ENCODE measurements at regions of chr17 and their contacts with region 1.

Region 1: DNA sequence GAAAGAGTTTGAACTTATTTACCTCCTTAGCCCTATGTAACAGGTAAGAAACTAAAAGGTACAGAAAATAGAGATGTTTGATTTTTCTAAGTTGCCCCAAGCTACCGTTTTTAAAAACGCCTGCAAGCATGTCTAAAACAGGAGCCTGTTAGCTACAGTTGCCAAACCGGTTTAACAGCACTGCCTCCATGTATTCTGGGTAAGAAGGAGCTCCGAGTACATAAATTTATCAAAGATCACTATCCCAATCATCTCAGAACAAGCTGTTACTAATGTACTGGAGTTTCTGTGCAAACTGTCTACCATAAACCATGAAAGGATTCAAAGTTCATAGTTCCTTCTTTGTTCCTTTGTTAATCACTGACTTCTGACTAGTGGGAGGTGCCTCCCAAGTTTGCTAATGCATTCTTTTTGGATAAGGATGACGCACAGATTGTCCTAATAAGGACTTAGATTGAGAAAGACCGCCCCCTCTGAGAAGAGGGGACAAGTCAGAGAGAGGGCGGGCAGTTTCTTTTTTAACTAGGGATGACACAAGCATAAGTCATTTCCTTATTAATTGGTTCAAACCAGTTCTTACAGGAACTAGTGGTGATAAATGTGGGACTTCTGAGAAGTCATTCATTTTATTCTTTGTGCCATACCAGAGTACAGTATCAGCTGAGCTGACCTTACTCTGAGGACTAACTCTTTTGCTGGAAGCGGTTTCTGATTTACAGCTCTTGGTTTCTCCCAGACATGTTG is 55.3 kb downstream of the TUBD1 start:
- DNase-seq: peak; percentile 82
- ATAC-seq: peak; percentile 86
- H3K4me3 Mint-ChIP-seq: peak overlapping the region; percentile 83
- H3K27ac Mint-ChIP-seq: peak overlapping the region; percentile 99
- H3K4me1 Mint-ChIP-seq: peaks cover 28% of the 10 kb centered on the region
- H3K27me3 Mint-ChIP-seq: peaks cover 2% of the 10 kb centered on the region
- CTCF ChIP-seq: no peak

Region 2: DNA sequence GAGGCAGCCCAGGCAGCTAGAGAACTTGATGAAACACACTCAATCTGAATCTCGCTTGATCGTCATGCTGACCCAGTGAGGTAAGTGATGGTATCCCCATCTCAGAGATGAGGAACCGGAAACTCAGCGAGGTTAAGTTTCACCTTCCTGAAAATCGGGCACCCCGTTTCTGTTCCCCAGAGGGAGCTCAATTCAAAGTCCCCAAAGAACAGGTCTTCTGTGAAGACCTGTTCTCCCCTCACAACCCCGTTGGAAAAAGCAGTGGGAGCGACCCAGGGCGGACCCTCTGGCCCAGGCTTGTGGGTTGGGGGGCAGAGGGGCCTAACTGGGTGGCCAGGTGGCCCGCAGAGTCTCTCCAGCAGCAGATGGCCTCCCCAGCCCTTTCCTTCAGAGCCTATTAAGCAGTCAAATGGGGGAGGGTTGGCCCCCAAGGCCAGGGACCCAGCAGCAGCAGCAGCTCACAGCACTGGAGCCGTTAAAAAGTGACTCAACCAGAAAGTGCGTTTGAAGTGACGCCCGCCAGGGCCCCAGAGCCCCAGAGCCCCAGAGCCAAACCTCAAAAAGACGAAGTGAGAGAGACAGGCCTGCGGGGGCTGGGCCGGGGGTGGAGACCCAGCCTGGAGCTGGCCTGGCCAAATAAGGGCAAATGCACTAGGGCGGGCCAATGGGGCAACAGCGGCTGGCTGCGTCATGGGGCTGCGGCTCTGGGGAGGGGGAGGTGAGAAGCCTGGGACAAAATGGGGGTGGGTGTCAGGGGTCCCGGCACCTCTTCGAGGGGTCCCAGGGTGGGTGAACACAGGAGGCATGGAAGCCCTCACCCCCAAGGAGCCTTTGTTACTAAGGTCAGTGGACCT is 1499.7 kb before region 1 on chr17:
- CTCF ChIA-PET with region 1: no interaction called
- POLR2A ChIA-PET with region 1: interaction called, 18 read pairs
- intact Hi-C with region 1: no loop called
- DNase-seq: peak; percentile 98
- ATAC-seq: peak; percentile 60
- H3K4me3 Mint-ChIP-seq: peak overlapping the region; percentile 81
- H3K27ac Mint-ChIP-seq: peak overlapping the region; percentile 96
- H3K4me1 Mint-ChIP-seq: peaks cover 3% of the 10 kb centered on the region
- H3K27me3 Mint-ChIP-seq: no peaks in the 10 kb centered on the region
- CTCF ChIP-seq: no peak

Region 3: DNA sequence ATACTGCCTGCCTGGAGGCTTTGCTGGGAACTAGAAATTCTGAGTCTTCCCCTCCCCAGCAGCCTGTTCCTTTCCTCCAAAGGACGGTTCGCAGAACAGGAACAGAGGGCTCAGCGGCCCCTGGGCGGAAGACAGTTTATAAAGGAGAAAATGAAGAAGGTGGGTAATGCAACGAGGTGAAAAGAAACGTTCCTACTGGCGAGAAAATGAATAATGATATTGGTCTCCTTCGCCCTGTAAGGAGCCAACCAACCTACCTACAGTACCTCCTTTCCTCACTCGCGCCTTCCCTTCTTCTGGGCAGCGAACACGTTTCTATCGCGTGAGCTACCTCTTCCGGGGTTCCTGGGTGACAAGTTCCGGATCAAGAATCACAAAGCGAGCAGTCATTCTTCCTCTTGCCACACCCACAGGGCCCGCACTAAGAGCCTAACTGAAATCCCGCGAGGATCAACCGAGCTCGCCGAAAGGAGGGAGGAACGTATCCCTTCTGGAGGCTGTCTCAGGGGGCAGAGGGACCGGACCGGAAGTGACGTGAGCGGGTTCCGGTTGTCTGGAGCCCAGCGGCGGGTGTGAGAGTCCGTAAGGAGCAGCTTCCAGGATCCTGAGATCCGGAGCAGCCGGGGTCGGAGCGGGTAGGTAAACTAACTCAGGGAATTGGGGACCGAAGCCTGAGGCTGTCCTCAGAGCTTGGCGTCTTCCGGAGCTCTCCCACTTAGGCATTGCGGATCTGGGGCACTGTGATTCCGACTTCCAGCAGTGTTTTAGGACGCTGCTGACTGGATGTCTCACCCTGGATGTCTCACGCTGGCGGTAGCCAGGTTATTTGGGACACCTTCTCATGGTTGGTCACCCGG is 130.1 kb before region 1 on chr17 and contains the starts of genes PTRH2 and VMP1:
- CTCF ChIA-PET with region 1: no interaction called
- POLR2A ChIA-PET with region 1: interaction called, 26 read pairs
- intact Hi-C with region 1: no loop called
- DNase-seq: peak; percentile 97
- ATAC-seq: peak; percentile 99
- H3K4me3 Mint-ChIP-seq: peak within 1 kb of the TSS; percentile 95
- H3K27ac Mint-ChIP-seq: peak within 1 kb of the TSS; percentile 97
- H3K4me1 Mint-ChIP-seq: peaks cover 46% of the 10 kb centered on the region
- H3K27me3 Mint-ChIP-seq: no peaks in the 10 kb centered on the region
- CTCF ChIP-seq: no peak
- total RNA-seq, gene PTRH2: 34.2 to 37.4 TPM
- total RNA-seq, gene VMP1: 239 to 248 TPM

Region 4: DNA sequence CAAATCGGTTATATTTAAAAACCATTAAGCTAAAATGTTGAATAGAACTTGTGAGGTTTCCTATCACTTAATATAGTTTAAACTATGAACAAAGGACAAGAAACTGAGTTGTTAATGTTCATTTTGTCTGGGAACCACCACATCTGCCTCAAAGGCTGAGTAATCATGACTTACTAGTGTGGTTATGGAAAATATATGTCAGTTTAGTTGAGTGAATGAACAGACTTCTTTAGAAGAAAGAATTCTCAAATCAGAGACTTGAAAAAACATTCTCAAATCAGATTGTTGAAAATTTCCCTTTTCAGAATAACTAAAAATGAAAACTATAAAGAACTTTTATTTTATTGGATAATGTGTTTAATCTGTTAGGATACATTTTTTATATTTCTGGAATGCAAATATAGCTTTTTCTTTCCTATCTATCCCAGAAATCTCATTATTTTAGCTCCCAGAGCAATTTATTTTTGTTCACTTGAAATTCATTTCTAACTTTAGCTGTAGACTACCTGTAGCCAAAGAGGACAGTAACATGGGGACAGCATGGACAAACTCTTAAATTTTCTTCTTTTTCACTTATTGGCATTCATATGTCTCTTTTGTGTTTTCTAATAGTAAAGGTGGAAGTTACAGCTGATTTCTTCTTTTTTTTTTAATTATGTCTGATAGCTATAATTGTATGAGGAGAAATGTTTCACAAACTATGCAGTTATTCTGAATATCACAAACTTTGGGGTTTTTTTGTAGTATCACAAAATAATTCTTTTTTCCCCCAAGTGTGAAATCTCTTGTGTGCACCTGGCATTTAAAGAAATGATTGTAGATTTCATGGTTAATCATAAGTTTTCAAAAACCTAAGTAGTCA is 74.7 kb before region 1 on chr17:
- CTCF ChIA-PET with region 1: interaction called, 5 read pairs
- POLR2A ChIA-PET with region 1: interaction called, 420 read pairs
- intact Hi-C with region 1: no loop called
- DNase-seq: peak; percentile 47
- ATAC-seq: peak; percentile 71
- H3K4me3 Mint-ChIP-seq: peak overlapping the region; percentile 48
- H3K27ac Mint-ChIP-seq: peak overlapping the region; percentile 93
- H3K4me1 Mint-ChIP-seq: peaks cover 66% of the 10 kb centered on the region
- H3K27me3 Mint-ChIP-seq: no peaks in the 10 kb centered on the region
- CTCF ChIP-seq: no peak

Region 5: GRCh38 chr17:59786536-59787319 is 50.8 kb before region 1 on chr17:
- CTCF ChIA-PET with region 1: interaction called, 51 read pairs
- POLR2A ChIA-PET with region 1: interaction called, 1,156 read pairs
- intact Hi-C with region 1: loop called (anchors 2 kb)
- DNase-seq: peak; percentile 92
- ATAC-seq: peak; percentile 86
- H3K4me3 Mint-ChIP-seq: peak overlapping the region; percentile 72
- H3K27ac Mint-ChIP-seq: peak overlapping the region; percentile 99
- H3K4me1 Mint-ChIP-seq: peaks cover 58% of the 10 kb centered on the region
- H3K27me3 Mint-ChIP-seq: no peaks in the 10 kb centered on the region
- CTCF ChIP-seq: no peak

Region 6: DNA sequence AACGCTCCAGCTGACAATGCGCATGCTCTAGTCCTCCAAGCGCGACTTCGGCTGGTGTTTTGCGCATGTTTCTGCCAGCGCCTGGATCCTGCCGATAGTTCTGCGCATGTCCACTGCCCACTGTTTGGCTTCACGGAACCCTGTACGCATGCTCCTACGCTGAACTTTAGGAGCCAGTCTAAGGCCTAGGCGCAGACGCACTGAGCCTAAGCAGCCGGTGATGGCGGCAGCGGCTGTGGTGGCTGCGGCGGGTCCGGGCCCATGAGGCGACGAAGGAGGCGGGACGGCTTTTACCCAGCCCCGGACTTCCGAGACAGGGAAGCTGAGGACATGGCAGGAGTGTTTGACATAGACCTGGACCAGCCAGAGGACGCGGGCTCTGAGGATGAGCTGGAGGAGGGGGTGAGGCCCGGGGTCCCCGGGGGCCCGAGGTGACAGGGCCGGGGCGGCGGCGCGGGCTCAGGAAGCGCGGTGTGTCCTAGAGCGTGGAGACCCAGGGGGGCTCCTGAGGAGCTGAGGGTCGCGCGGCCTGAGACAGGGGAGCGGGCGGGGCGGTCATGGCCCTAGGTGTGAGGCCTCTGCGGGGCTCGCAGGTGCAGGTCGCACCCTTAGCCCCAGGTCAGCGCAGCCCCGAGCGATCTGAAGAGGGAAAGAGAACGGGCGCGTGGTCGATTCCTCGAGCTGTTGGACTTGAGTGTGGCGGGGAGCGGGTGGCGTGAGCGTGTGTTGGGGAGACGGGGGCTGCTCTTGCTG is 55.6 kb after region 1 on chr17 and contains the starts of genes RPS6KB1 and TUBD1:
- CTCF ChIA-PET with region 1: no interaction called
- POLR2A ChIA-PET with region 1: interaction called, 23 read pairs
- intact Hi-C with region 1: no loop called
- DNase-seq: peak; percentile 98
- ATAC-seq: peak; percentile 98
- H3K4me3 Mint-ChIP-seq: peak within 1 kb of the TSS; percentile 93
- H3K27ac Mint-ChIP-seq: peak within 1 kb of the TSS; percentile 98
- H3K4me1 Mint-ChIP-seq: peaks cover 42% of the 10 kb centered on the region
- H3K27me3 Mint-ChIP-seq: no peaks in the 10 kb centered on the region
- CTCF ChIP-seq: no peak
- total RNA-seq, gene RPS6KB1: 39.9 to 44.2 TPM
- total RNA-seq, gene TUBD1: 7.9 to 11.1 TPM

Measured in activated CD8-positive, alpha-beta T cell treated with anti-CD3 and anti-CD28 coated beads for 36 hours (primary cell).